Vagina (tissue), 2 donors: ENCODE measurements at regions of chr6 and their contacts with region 1.

Region 1: GRCh38 chr6:108558372-108559096 is 2.2 kb upstream of the FOXO3 start:
- DNase-seq: peak in 1 of 2 donors; percentile 99
- H3K4me3 ChIP-seq: peak overlapping the region; percentile 77 to 94
- H3K27ac ChIP-seq: peak overlapping the region; percentile 99
- H3K4me1 ChIP-seq: peaks cover 35% of the 10 kb centered on the region
- H3K27me3 ChIP-seq: no peaks in the 10 kb centered on the region
- CTCF ChIP-seq: peak in 1 of 3 experiments; percentile 37
- POLR2A ChIP-seq: peak in 1 of 2 donors; percentile 84

Region 2: DNA sequence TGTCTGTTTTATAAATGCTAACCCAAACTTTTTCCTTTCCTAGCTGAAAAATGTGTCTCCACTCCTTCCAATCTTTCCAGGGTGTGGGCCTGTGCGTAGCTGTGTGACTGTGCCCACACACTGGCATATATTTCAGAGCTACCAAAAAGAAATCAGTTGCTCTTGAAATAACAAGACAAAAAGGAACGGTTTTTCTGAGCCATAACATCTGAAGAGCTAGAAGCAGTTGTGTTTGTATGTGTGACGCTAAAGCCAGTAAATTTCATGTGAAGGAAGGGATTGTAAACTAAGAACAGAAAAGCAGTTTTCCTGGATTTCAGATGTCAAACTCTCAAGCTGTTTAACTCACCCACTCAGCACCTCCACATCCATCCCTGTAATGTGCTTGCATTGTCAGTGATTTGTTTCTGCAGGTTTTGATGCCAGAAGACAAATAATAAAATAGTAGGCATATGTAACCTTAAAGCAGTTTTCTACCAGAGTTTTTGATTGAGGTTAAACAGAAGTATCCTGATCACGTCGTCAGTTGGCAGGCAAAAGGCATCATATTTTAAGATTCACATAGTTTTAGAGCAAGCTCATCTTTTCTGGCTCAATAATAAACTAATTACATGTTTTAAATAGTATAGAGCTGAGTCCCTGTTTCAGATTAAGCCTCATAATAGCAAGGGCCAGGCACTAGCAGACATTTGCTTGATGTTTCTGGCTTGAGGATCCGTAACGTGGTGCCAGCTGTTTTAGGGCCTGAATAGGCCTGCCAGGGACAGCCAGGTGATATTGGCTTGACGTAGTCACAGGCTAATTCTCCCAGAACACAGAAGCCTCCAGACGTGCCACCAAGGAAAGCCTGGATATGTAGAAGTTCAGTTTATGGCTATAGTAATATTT is 93.0 kb after region 1 on chr6:
- intact Hi-C with region 1: loop called (anchors 5 kb)
- DNase-seq: no peak
- H3K4me3 ChIP-seq: no peak overlapping the region
- H3K27ac ChIP-seq: peak overlapping the region; percentile 79
- H3K4me1 ChIP-seq: peaks cover 86% of the 10 kb centered on the region
- H3K27me3 ChIP-seq: no peaks in the 10 kb centered on the region
- CTCF ChIP-seq: no peak
- POLR2A ChIP-seq: no peak

Region 3: DNA sequence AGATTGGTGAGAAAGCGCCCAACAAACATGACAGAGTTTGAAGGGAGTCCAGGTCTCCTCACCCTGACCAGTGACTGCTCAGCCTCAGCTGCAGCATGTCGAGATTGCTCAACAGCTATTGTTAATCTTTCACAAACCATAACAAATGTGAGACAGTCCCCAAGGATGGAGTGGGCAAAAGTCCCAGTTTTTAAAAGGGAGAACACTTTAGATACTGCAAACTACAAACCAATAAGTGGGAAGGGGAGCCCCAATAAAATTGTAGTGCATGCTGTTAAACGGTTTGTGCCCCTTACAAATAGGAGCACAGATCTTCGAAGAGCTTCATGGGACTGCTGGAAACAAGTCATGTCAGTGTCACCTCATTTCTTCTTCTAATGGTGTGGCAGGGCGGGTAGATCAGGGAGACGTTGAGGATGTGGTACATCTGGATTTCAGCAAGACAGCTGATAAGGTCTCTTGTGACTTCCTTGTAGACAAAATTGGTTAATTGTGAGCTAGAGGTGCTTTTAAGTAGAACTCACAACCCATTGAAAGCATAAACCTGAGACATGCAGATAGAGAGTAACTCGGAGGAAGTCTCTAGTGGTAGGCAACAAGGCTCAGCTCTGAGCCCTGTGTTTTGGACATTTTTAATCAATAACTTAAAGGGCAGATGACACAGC is 155.7 kb after region 1 on chr6:
- intact Hi-C with region 1: no loop called
- DNase-seq: no peak
- H3K4me3 ChIP-seq: no peak overlapping the region
- H3K27ac ChIP-seq: peak overlapping the region; percentile 55
- H3K4me1 ChIP-seq: peaks cover 34% of the 10 kb centered on the region
- H3K27me3 ChIP-seq: no peaks in the 10 kb centered on the region
- CTCF ChIP-seq: no peak
- POLR2A ChIP-seq: no peak

Region 4: GRCh38 chr6:108782179-108783041 is 223.9 kb after region 1 on chr6:
- intact Hi-C with region 1: loop called (anchors 5 kb)
- DNase-seq: no peak
- H3K4me3 ChIP-seq: peak overlapping the region; percentile 41 to 44
- H3K27ac ChIP-seq: peak overlapping the region; percentile 72
- H3K4me1 ChIP-seq: peaks cover 12% of the 10 kb centered on the region
- H3K27me3 ChIP-seq: no peaks in the 10 kb centered on the region
- CTCF ChIP-seq: peak; percentile 21 to 72 (median 61)
- POLR2A ChIP-seq: no peak